Naive thymus-derived CD4-positive, alpha-beta T cell (primary cell): ENCODE measurements at regions of chr7 and their contacts with region 1.

Region 1: GRCh38 chr7:923108-924041 is 31.1 kb downstream of the ADAP1 start:
- DNase-seq: peak; percentile 67 to 91 (median 90)
- ATAC-seq: peak; percentile 93
- H3K4me3 ChIP-seq: peak overlapping the region; percentile 84
- H3K4me3 Mint-ChIP-seq: peak overlapping the region; percentile 77 to 90 (median 88)
- H3K27ac ChIP-seq: peak overlapping the region; percentile 84
- H3K27ac Mint-ChIP-seq: peak overlapping the region; percentile 89 to 96 (median 92)
- H3K4me1 ChIP-seq: peaks cover 30% of the 10 kb centered on the region in 2 donors
- H3K4me1 Mint-ChIP-seq: peaks cover 19 to 34% (median 25%) of the 10 kb centered on the region in 7 donors
- H3K27me3 ChIP-seq: no peaks in the 10 kb centered on the region
- H3K27me3 Mint-ChIP-seq: no peaks in the 10 kb centered on the region

Region 2: GRCh38 chr7:620052-620451 is 303.3 kb before region 1 on chr7:
- CTCF ChIA-PET with region 1: no interaction called
- POLR2A ChIA-PET with region 1: no interaction called
- intact Hi-C with region 1: loop called in 1 of 2 experiments (anchors 1 kb)
- DNase-seq: no peak
- ATAC-seq: no peak
- H3K4me3 ChIP-seq: no peak overlapping the region
- H3K4me3 Mint-ChIP-seq: peak overlapping the region in 7 of 10 donors; percentile 33 to 93 (median 79)
- H3K27ac ChIP-seq: peak overlapping the region; percentile 91
- H3K27ac Mint-ChIP-seq: peak overlapping the region; percentile 96 to 100 (median 99)
- H3K4me1 ChIP-seq: peaks cover 39 to 42% of the 10 kb centered on the region in 2 donors
- H3K4me1 Mint-ChIP-seq: peaks cover 32 to 77% (median 54%) of the 10 kb centered on the region in 7 donors
- H3K27me3 ChIP-seq: no peaks in the 10 kb centered on the region
- H3K27me3 Mint-ChIP-seq: no peaks in the 10 kb centered on the region

Region 3: GRCh38 chr7:831596-832166 is 91.7 kb before region 1 on chr7:
- CTCF ChIA-PET with region 1: no interaction called
- POLR2A ChIA-PET with region 1: no interaction called
- intact Hi-C with region 1: loop called in 1 of 2 experiments (anchors 5 kb)
- DNase-seq: peak in 3 of 9 donors; percentile 19 to 49 (median 26)
- ATAC-seq: peak; percentile 13
- H3K4me3 ChIP-seq: peak overlapping the region; percentile 12
- H3K4me3 Mint-ChIP-seq: peak overlapping the region; percentile 64 to 89 (median 84)
- H3K27ac ChIP-seq: peak overlapping the region; percentile 83
- H3K27ac Mint-ChIP-seq: peak overlapping the region; percentile 86 to 98 (median 94)
- H3K4me1 ChIP-seq: peaks cover 23 to 36% of the 10 kb centered on the region in 2 donors
- H3K4me1 Mint-ChIP-seq: peaks cover 38 to 67% (median 57%) of the 10 kb centered on the region in 7 donors
- H3K27me3 ChIP-seq: no peaks in the 10 kb centered on the region
- H3K27me3 Mint-ChIP-seq: no peaks in the 10 kb centered on the region

Region 4: GRCh38 chr7:939843-940242 is 16.5 kb after region 1 on chr7:
- CTCF ChIA-PET with region 1: no interaction called
- POLR2A ChIA-PET with region 1: no interaction called
- intact Hi-C with region 1: loop called in 1 of 2 experiments (anchors 2 kb)
- DNase-seq: no peak
- ATAC-seq: no peak
- H3K4me3 ChIP-seq: no peak overlapping the region
- H3K4me3 Mint-ChIP-seq: no peak overlapping the region
- H3K27ac ChIP-seq: no peak overlapping the region
- H3K27ac Mint-ChIP-seq: no peak overlapping the region
- H3K4me1 ChIP-seq: no peaks in the 10 kb centered on the region
- H3K4me1 Mint-ChIP-seq: peaks cover 0 to 22% (median 4%) of the 10 kb centered on the region in 7 donors
- H3K27me3 ChIP-seq: no peaks in the 10 kb centered on the region
- H3K27me3 Mint-ChIP-seq: peaks cover 0 to 10% (median 0%) of the 10 kb centered on the region in 5 donors

Region 5: DNA sequence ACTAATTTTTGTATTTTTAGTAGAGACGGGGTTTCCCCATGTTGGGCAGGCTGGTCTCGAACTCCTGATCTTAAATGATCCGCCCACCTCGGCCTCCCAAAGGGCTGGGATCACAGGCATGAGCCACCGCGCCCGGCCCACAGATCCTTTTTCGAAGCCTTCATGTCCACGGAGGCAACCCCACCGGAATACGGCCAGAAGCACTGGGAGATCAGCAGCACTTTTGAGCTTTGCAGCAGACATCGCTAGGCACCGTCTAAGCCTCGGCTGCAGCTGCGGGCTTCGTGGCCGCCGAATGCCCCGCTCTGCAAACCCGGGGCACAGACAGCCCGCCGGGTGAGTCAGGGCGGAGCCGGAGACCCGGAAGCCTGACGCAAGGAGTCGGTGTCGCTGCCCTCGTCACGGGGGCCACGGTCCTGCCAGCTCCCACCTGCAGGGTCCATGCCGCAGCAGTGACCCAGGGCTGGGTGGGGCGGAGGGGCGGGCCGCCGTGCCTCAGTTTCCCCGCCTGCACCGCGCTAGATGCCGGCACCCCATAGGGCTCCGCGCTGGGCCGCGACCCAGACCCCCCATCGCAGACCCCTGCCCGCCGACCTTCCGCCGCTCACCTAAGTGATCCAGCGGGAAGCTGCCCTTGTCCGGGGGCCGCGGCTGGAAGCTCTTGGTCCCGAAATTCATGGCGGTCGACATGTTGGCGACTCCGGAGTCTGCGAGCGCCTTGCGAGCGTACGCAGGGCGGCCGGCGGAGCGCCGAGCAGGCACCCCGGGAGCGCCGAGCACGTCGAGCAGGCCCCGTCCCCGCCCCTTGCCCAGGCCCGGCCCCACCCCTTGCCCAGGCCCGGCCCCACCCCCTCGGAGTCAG is 51.7 kb after region 1 on chr7 and contains the start of gene COX19:
- CTCF ChIA-PET with region 1: interaction called, 3 read pairs
- POLR2A ChIA-PET with region 1: interaction called, 21 read pairs
- intact Hi-C with region 1: loop called (anchors 1 kb)
- DNase-seq: peak; percentile 82 to 92 (median 87)
- ATAC-seq: peak; percentile 98
- H3K4me3 ChIP-seq: peak within 1 kb of the TSS; percentile 95
- H3K4me3 Mint-ChIP-seq: peak within 1 kb of the TSS; percentile 86 to 96 (median 92)
- H3K27ac ChIP-seq: peak within 1 kb of the TSS; percentile 98
- H3K27ac Mint-ChIP-seq: peak within 1 kb of the TSS; percentile 59 to 94 (median 89)
- H3K4me1 ChIP-seq: peaks cover 14 to 20% of the 10 kb centered on the region in 2 donors
- H3K4me1 Mint-ChIP-seq: peaks cover 12 to 36% (median 25%) of the 10 kb centered on the region in 7 donors
- H3K27me3 ChIP-seq: no peaks in the 10 kb centered on the region
- H3K27me3 Mint-ChIP-seq: no peaks in the 10 kb centered on the region
- total RNA-seq, gene COX19: 18.3 to 48.2 (median 46.1) TPM

Region 6: GRCh38 chr7:1059200-1060091 is 136.1 kb after region 1 on chr7:
- CTCF ChIA-PET with region 1: no interaction called
- POLR2A ChIA-PET with region 1: no interaction called
- intact Hi-C with region 1: no loop called
- DNase-seq: peak in 1 of 9 donors; percentile 44
- ATAC-seq: peak; percentile 41
- H3K4me3 ChIP-seq: no peak overlapping the region
- H3K4me3 Mint-ChIP-seq: peak overlapping the region in 3 of 10 donors; percentile 14 to 73 (median 17)
- H3K27ac ChIP-seq: no peak overlapping the region
- H3K27ac Mint-ChIP-seq: peak overlapping the region in 3 of 9 donors; percentile 12 to 63 (median 39)
- H3K4me1 ChIP-seq: peaks cover 0 to 17% of the 10 kb centered on the region in 2 donors
- H3K4me1 Mint-ChIP-seq: peaks cover 16 to 52% (median 25%) of the 10 kb centered on the region in 7 donors
- H3K27me3 ChIP-seq: no peaks in the 10 kb centered on the region
- H3K27me3 Mint-ChIP-seq: peaks cover 0 to 3% (median 0%) of the 10 kb centered on the region in 5 donors